ENCODE measurements at regions of chr12 and their contacts with region 1.

Region 1: GRCh38 chr12:58920102-58920960 is at the start of gene LRIG3:
- DNase-seq: peak; percentile 99
- H3K4me3 ChIP-seq: peak within 1 kb of the TSS; percentile 89 to 99 (median 96)
- H3K27ac ChIP-seq: peak within 1 kb of the TSS; percentile 91
- H3K4me1 ChIP-seq: peaks cover 43% of the 10 kb centered on the region
- H3K27me3 ChIP-seq: no peaks in the 10 kb centered on the region
- CTCF ChIP-seq: no peak
- POLR2A ChIP-seq: no peak
- total RNA-seq, gene LRIG3: 42.9 and 55.5 TPM in 2 replicates

Region 2: DNA sequence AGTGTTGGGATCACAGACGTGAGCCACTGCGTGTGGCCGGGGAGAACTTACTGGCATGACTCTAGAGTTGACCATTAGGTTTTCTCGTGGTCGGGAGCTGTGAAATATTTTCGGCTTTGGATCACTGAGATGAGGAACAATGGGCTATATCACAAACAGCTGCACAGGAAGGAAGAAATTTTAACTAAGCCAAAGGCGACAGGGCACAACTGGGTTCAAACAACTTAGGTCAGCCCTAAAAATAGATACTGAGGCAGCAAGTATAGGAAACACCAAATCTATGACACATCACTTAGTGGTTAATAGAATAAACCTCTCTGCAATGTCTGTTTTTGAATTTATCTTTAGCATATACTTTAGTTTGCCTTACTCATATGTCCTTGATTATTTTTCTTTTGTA is 162.9 kb before region 1 on chr12:
- CTCF ChIA-PET with region 1: no interaction called
- POLR2A ChIA-PET with region 1: no interaction called
- dilution Hi-C with region 1: no loop called
- intact Hi-C with region 1: loop called (anchors 1 kb)
- DNase-seq: peak; percentile 89
- H3K4me3 ChIP-seq: no peak overlapping the region
- H3K27ac ChIP-seq: peak overlapping the region; percentile 87
- H3K4me1 ChIP-seq: peaks cover 16% of the 10 kb centered on the region
- H3K27me3 ChIP-seq: no peaks in the 10 kb centered on the region
- CTCF ChIP-seq: no peak
- POLR2A ChIP-seq: no peak

Region 3: DNA sequence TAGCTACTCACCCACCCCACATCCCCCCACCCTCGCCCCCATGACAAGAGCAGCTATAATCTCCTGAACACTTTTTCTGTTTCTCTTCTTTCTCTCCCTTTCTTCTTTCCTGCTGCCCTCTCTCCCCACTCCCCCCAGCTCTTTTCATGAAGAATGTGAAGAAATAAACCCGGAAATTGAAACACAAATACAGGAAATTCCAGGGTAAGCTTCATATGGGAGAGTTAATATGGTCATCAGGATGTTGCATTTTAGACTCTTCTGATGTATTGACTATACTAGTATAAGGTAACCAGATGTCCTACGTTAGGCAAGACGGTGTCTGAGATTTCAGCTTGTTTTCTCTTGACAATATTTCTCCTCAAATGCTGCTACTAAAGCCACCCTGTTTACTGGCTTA is 41.6 kb after region 1 on chr12:
- CTCF ChIA-PET with region 1: interaction called, 19 read pairs
- POLR2A ChIA-PET with region 1: interaction called, 3 read pairs
- dilution Hi-C with region 1: no loop called
- intact Hi-C with region 1: loop called (anchors 1 kb)
- DNase-seq: peak; percentile 72
- H3K4me3 ChIP-seq: peak overlapping the region in 1 of 3 experiments; percentile 15
- H3K27ac ChIP-seq: peak overlapping the region; percentile 97
- H3K4me1 ChIP-seq: peaks cover 18% of the 10 kb centered on the region
- H3K27me3 ChIP-seq: no peaks in the 10 kb centered on the region
- CTCF ChIP-seq: no peak
- POLR2A ChIP-seq: no peak

Region 4: GRCh38 chr12:59041241-59042121 is 121.2 kb after region 1 on chr12:
- CTCF ChIA-PET with region 1: interaction called, 10 read pairs
- POLR2A ChIA-PET with region 1: no interaction called
- dilution Hi-C with region 1: no loop called
- intact Hi-C with region 1: loop called (anchors 1 kb)
- DNase-seq: peak; percentile 89
- H3K4me3 ChIP-seq: no peak overlapping the region
- H3K27ac ChIP-seq: peak overlapping the region; percentile 81
- H3K4me1 ChIP-seq: peaks cover 32% of the 10 kb centered on the region
- H3K27me3 ChIP-seq: no peaks in the 10 kb centered on the region
- CTCF ChIP-seq: no peak
- POLR2A ChIP-seq: peak; percentile 27

Region 5: GRCh38 chr12:59077575-59078426 is 157.5 kb after region 1 on chr12:
- CTCF ChIA-PET with region 1: interaction called, 8 read pairs
- POLR2A ChIA-PET with region 1: interaction called, 5 read pairs
- dilution Hi-C with region 1: no loop called
- intact Hi-C with region 1: loop called (anchors 1 kb)
- DNase-seq: peak; percentile 93
- H3K4me3 ChIP-seq: no peak overlapping the region
- H3K27ac ChIP-seq: peak overlapping the region; percentile 9
- H3K4me1 ChIP-seq: peaks cover 52% of the 10 kb centered on the region
- H3K27me3 ChIP-seq: no peaks in the 10 kb centered on the region
- CTCF ChIP-seq: no peak
- POLR2A ChIP-seq: no peak

Measured in endothelial cell of umbilical vein (primary cell).